ENCODE measurements at regions of chr4 and their contacts with region 1.

Region 1: GRCh38 chr4:128809477-128810330 is at the start of gene JADE1:
- DNase-seq: peak; percentile 93
- H3K4me3 ChIP-seq: peak within 1 kb of the TSS; percentile 59 to 80
- H3K27ac ChIP-seq: peak within 1 kb of the TSS; percentile 85 to 89
- H3K4me1 ChIP-seq: no peaks in the 10 kb centered on the region
- H3K27me3 ChIP-seq: no peaks in the 10 kb centered on the region
- CTCF ChIP-seq: peak; percentile 38 to 79 (median 63)
- POLR2A ChIP-seq: peak; percentile 42
- total RNA-seq, gene JADE1: 31.6 to 33.9 TPM

Region 2: GRCh38 chr4:128287871-128288688 is 521.6 kb before region 1 on chr4:
- intact Hi-C with region 1: loop called (anchors 5 kb)
- DNase-seq: peak; percentile 99
- H3K4me3 ChIP-seq: peak overlapping the region; percentile 84 to 89
- H3K27ac ChIP-seq: peak overlapping the region; percentile 90 to 94
- H3K4me1 ChIP-seq: no peaks in the 10 kb centered on the region
- H3K27me3 ChIP-seq: no peaks in the 10 kb centered on the region
- CTCF ChIP-seq: peak in 3 of 4 experiments; percentile 28 to 67 (median 59)
- POLR2A ChIP-seq: peak; percentile 85

Region 3: GRCh38 chr4:128454281-128455075 is 355.2 kb before region 1 on chr4:
- intact Hi-C with region 1: loop called (anchors 2 kb)
- DNase-seq: peak; percentile 78
- H3K4me3 ChIP-seq: no peak overlapping the region
- H3K27ac ChIP-seq: no peak overlapping the region
- H3K4me1 ChIP-seq: no peaks in the 10 kb centered on the region
- H3K27me3 ChIP-seq: no peaks in the 10 kb centered on the region
- CTCF ChIP-seq: peak; percentile 35 to 84 (median 71)
- POLR2A ChIP-seq: no peak

Region 4: GRCh38 chr4:128574706-128575105 is 235.0 kb before region 1 on chr4:
- intact Hi-C with region 1: loop called (anchors 2 kb)
- DNase-seq: peak; percentile 82
- H3K4me3 ChIP-seq: no peak overlapping the region
- H3K27ac ChIP-seq: no peak overlapping the region
- H3K4me1 ChIP-seq: no peaks in the 10 kb centered on the region
- H3K27me3 ChIP-seq: no peaks in the 10 kb centered on the region
- CTCF ChIP-seq: peak; percentile 35 to 80 (median 63)
- POLR2A ChIP-seq: no peak

Region 5: GRCh38 chr4:128653517-128654444 is 155.9 kb before region 1 on chr4:
- intact Hi-C with region 1: loop called (anchors 5 kb)
- DNase-seq: peak; percentile 66
- H3K4me3 ChIP-seq: no peak overlapping the region
- H3K27ac ChIP-seq: peak overlapping the region; percentile 39 to 46
- H3K4me1 ChIP-seq: peaks cover 12% of the 10 kb centered on the region
- H3K27me3 ChIP-seq: no peaks in the 10 kb centered on the region
- CTCF ChIP-seq: no peak
- POLR2A ChIP-seq: no peak

Region 6: GRCh38 chr4:128863312-128864075 is 53.8 kb after region 1 on chr4:
- intact Hi-C with region 1: loop called (anchors 2 kb)
- DNase-seq: peak; percentile 65
- H3K4me3 ChIP-seq: no peak overlapping the region
- H3K27ac ChIP-seq: no peak overlapping the region
- H3K4me1 ChIP-seq: no peaks in the 10 kb centered on the region
- H3K27me3 ChIP-seq: no peaks in the 10 kb centered on the region
- CTCF ChIP-seq: peak; percentile 82 to 99 (median 86)
- POLR2A ChIP-seq: no peak

Region 7: DNA sequence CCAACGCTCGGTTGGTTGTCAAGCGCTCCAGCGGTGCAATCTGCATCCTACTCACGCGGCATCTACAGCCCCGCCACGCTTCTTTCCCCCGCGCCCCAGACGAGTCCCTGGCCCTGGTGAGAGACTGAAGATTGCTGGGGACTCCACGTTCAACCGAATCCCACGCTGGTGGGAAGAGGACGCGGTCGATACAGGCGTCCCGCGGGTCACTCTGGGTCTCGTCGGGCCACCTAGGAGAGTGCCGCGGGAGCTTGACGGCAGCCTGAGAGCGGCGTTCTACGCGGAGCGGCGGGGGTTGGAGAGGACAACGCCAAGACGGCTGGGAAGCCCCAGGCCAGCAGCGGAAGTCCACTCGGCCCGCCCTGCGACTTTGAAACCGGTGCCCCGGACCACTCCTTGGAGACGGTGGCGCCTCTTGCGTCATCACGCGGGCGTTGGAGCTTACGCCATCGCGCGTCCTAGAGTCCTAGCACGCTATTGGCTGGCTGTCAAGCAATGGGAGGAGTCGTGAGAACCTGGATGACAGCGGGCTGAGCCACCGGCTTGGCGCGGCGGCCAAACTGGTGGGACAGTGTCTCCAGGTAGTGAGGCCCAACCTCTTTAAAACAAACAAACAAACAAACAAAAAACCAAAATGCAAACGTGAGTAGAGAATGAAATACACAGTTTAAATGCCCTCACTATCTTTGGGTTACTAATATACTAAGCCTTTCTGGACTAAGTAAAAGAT is 283.7 kb after region 1 on chr4 and contains the start of gene SCLT1:
- intact Hi-C with region 1: loop called (anchors 10 kb)
- DNase-seq: peak; percentile 99
- H3K4me3 ChIP-seq: peak within 1 kb of the TSS; percentile 66 to 67
- H3K27ac ChIP-seq: peak within 1 kb of the TSS; percentile 91 to 95
- H3K4me1 ChIP-seq: no peaks in the 10 kb centered on the region
- H3K27me3 ChIP-seq: no peaks in the 10 kb centered on the region
- CTCF ChIP-seq: no peak
- POLR2A ChIP-seq: peak; percentile 93
- total RNA-seq, gene SCLT1: 6.6 to 7.0 TPM

Region 8: DNA sequence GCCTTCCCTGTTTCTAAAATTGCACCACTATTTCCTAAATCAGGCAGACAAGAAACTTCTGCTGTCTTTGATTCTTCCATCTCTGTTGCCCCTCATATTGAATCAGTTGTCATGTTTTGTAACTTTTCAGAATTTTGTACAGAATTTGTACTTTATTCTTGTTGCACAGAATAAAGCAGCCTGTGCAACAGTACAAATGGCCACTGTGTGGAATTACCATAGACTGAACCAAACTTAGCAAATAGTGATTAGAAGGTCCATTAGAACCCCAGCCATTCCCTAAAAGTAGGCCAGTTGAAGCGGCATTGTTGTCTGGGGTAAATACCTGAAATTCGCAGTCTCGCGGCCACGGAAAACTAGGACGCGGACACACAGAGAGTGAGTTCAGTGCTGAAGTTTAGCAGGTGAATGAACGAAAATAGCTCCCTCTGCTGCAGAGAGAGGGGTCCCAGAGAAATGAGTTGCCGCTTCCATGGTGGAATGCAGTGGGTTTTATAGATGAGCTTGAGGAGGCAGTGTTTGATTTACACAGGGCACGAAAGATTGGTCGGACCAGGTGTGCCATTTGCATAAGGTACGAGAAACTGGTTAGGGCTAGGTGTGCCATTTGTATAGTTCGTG is 358.0 kb after region 1 on chr4:
- intact Hi-C with region 1: no loop called
- DNase-seq: no peak
- H3K4me3 ChIP-seq: no peak overlapping the region
- H3K27ac ChIP-seq: no peak overlapping the region
- H3K4me1 ChIP-seq: no peaks in the 10 kb centered on the region
- H3K27me3 ChIP-seq: no peaks in the 10 kb centered on the region
- CTCF ChIP-seq: no peak
- POLR2A ChIP-seq: no peak

Measured in prostate gland (tissue), 2 donors.